Heart left ventricle (tissue), 16 donors: ENCODE measurements at regions of chr9 and their contacts with region 1.

Region 1: DNA sequence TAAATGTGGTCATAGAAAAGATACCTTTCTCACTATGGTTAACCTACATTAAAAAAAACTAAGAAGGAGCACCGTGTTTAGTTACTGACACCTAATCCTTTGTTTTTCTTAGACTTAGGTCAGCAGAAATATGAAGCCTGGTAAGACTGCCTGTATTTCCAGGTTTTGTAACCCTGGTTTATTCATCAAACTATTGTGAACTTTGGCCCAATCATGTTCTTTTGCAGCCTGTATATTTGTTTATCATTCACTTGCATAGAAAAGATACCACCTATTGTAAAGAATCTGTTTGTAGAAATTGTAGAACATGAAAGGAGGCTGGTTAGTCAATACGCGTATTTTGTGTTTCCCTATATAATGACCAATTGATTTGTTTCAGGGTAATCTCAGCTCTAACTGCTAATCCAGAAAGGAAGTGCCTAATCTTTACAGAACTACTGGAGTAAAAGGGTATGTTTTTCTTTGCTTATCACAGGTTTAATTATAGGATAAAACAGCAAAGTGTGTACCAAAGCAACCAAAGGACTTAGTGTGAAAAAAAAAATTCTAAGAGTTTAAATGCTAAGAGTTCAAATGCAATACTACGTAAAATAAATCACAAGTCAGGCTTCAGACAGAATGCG is 103.6 kb downstream of the LURAP1L start:
- DNase-seq: no peak
- ATAC-seq: no peak
- H3K4me3 ChIP-seq: no peak overlapping the region
- H3K27ac ChIP-seq: no peak overlapping the region
- H3K4me1 ChIP-seq: peaks cover 0 to 21% (median 5%) of the 10 kb centered on the region in 12 donors
- H3K27me3 ChIP-seq: no peaks in the 10 kb centered on the region
- CTCF ChIP-seq: no peak
- POLR2A ChIP-seq: no peak

Region 2: DNA sequence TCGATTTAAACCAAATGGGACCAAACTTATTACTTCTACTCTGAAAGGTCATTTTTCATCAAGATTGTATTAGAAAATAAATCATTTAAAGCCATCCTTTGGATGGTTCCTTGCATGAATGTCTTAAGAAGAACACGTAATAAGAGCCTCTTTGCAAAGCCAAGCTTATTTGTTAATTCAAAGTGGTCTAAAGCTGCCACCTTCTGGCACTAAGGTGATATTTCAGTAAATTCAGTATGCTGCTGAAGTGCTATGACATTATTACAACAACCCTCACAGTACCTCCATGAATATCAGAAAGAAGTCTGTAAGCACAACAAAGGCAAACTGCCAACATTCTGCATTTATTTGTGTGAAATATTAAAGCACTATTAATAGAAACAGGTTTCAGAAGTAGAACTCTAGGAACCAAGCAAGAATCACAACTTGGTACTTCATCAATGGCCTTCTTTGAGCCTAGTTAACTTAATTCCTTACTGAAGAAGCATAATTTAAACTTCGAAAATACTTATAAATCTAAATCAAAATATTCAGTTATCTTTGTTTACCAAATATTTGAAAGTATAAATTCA is 238.4 kb before region 1 on chr9:
- intact Hi-C with region 1: no loop called
- DNase-seq: no peak
- ATAC-seq: peak in 2 of 4 donors; percentile 61 to 68
- H3K4me3 ChIP-seq: no peak overlapping the region
- H3K27ac ChIP-seq: no peak overlapping the region
- H3K4me1 ChIP-seq: no peaks in the 10 kb centered on the region
- H3K27me3 ChIP-seq: no peaks in the 10 kb centered on the region
- CTCF ChIP-seq: peak; percentile 25 to 64 (median 51)
- POLR2A ChIP-seq: no peak

Region 3: DNA sequence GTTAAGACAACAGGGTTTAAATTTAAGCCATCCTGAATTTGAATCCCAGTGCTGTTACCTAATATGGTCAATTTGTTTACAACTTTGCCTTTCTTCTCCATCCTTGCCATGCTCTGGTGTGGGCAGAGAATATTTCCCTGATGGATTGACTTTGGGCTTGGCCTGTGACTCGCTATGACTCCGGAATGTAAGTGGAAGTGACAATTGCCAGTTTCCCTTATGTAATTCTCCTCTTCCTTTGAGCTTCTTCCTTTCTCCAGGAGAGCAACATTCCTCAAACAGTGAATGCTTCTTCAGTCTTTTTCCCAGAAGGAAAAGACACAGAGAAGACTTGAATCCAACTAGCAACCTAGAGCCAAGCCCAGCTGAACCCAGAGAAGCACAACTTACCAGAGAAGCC is 55.5 kb after region 1 on chr9:
- intact Hi-C with region 1: loop called in 1 of 10 experiments (anchors 10 kb)
- DNase-seq: no peak
- ATAC-seq: no peak
- H3K4me3 ChIP-seq: no peak overlapping the region
- H3K27ac ChIP-seq: no peak overlapping the region
- H3K4me1 ChIP-seq: peaks cover 0 to 18% (median 0%) of the 10 kb centered on the region in 12 donors
- H3K27me3 ChIP-seq: no peaks in the 10 kb centered on the region
- CTCF ChIP-seq: no peak
- POLR2A ChIP-seq: no peak

Region 4: DNA sequence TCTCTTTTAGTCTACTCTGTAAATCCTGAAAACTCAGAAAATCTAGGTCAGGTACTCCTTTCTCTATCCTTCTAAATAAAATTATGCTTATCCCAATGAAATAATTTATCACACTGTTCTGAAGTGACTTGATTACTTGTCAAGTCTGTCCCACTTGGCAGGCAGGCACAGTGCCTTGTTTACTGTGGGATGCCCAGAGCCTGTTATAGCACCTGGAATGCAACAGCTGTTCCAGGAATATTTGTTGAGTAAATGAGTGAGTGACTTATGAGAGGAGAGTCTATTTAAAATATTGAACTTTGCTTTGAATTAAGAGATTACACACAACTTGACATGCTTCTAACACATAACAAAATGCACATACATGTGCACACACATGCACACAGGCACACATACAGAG is 271.0 kb after region 1 on chr9:
- intact Hi-C with region 1: no loop called
- DNase-seq: peak; percentile 26 to 55 (median 48)
- ATAC-seq: peak; percentile 91 to 97 (median 92)
- H3K4me3 ChIP-seq: no peak overlapping the region
- H3K27ac ChIP-seq: no peak overlapping the region
- H3K4me1 ChIP-seq: peaks cover 0 to 9% (median 0%) of the 10 kb centered on the region in 12 donors
- H3K27me3 ChIP-seq: no peaks in the 10 kb centered on the region
- CTCF ChIP-seq: no peak
- POLR2A ChIP-seq: no peak